HepG2 (cell line): ENCODE measurements at regions of chr2 and their contacts with region 1.

Region 1: GRCh38 chr2:154686179-154686578 is 12.3 kb upstream of the KCNJ3 start:
- DNase-seq: no peak
- ATAC-seq: no peak; the same call in 2 of the 3 replicates
- H3K4me3 ChIP-seq: no peak overlapping the region
- H3K27ac ChIP-seq: no peak overlapping the region
- H3K4me1 ChIP-seq: no peaks in the 10 kb centered on the region
- H3K27me3 ChIP-seq: no peaks in the 10 kb centered on the region
- CTCF ChIP-seq: no peak
- EP300 ChIP-seq: no peak
- POLR2A ChIP-seq: no peak
- RAD21 ChIP-seq: no peak

Region 2: DNA sequence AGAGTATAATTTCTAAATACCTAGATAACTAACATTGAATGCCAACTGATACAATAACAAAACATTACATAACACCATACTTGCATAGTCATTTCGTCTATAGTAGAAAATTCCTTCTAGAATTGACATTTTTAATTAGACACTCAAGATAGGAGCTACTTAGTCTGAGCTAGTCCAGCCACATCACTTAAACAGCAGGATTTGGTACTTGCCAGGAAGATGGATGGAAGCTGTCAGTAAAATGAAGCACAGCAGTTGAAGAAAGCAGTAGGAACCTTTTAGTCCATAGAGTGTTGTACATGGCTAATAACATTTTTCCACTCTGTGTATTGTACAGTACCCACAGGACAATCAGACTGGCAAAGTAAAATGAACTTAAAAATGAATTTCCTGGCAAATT is 442.5 kb before region 1 on chr2:
- CTCF ChIA-PET with region 1: no interaction called
- POLR2A ChIA-PET with region 1: no interaction called
- in situ Hi-C with region 1: no loop called
- intact Hi-C with region 1: no loop called
- DNase-seq: no peak
- ATAC-seq: no peak
- H3K4me3 ChIP-seq: no peak overlapping the region
- H3K27ac ChIP-seq: no peak overlapping the region
- H3K4me1 ChIP-seq: no peaks in the 10 kb centered on the region
- H3K27me3 ChIP-seq: no peaks in the 10 kb centered on the region
- CTCF ChIP-seq: no peak
- EP300 ChIP-seq: no peak
- POLR2A ChIP-seq: no peak
- RAD21 ChIP-seq: no peak

Region 3: DNA sequence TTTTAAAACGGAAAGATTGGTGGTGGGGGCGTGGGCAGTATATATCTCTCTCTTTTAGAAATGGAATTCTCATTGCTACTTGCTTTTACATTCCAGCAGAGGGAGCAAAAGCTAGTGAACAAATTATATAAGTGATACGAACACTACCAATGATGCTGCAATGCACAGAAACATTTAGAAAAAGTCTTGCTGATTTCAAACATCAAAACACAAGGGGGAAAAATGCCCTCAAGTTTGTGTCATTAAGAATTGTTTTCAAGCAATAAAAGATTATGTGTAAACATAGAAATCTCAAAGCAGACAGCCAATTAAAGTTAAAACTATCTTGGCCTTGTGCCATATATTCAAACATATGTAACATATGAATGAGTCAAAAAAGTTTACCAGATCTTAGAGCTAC is 284.0 kb before region 1 on chr2:
- CTCF ChIA-PET with region 1: no interaction called
- POLR2A ChIA-PET with region 1: no interaction called
- in situ Hi-C with region 1: no loop called
- intact Hi-C with region 1: loop called (anchors 5 kb)
- DNase-seq: peak; percentile 53
- ATAC-seq: peak; percentile 84
- H3K4me3 ChIP-seq: no peak overlapping the region
- H3K27ac ChIP-seq: no peak overlapping the region
- H3K4me1 ChIP-seq: peaks cover 11% of the 10 kb centered on the region
- H3K27me3 ChIP-seq: no peaks in the 10 kb centered on the region
- CTCF ChIP-seq: peak; percentile 65
- EP300 ChIP-seq: no peak
- POLR2A ChIP-seq: no peak
- RAD21 ChIP-seq: peak; percentile 51; the same call in 1 of the 2 replicates

Region 4: DNA sequence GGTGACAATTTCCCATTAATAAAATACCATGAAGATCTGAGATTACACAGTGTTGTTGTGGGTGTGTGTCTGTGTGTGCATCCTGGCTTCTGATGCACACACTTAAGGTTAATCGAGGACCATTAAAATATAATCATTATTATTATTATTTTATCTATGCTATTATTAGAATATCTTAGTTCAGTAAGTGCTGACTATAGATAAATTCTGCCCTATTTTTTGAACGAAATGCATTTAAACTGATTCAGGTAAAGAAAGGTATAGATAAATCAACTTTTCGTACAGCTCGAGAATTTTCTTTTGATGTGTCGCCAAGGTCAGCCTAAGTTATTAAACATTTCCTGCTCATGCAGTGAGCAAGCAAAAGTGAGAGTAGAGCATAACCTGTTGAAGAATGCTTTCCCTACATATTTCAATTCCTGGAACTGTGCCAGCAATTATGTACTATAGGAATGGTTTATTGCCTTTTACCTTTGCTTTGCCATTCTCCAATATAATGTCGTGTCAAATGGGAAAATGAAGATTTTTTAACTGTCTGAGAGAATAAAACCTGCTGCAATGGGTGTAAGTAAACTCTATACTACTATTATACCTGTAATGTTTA is 38.1 kb after region 1 on chr2:
- CTCF ChIA-PET with region 1: no interaction called
- POLR2A ChIA-PET with region 1: no interaction called
- in situ Hi-C with region 1: no loop called
- intact Hi-C with region 1: loop called (anchors 1 kb)
- DNase-seq: no peak
- ATAC-seq: no peak
- H3K4me3 ChIP-seq: no peak overlapping the region
- H3K27ac ChIP-seq: no peak overlapping the region
- H3K4me1 ChIP-seq: no peaks in the 10 kb centered on the region
- H3K27me3 ChIP-seq: no peaks in the 10 kb centered on the region
- CTCF ChIP-seq: no peak
- EP300 ChIP-seq: no peak
- POLR2A ChIP-seq: no peak
- RAD21 ChIP-seq: no peak